H1 (cell line): ENCODE measurements at regions of chr2 and their contacts with region 1.

Region 1: GRCh38 chr2:160022162-160022561 is 40.3 kb downstream of the PLA2R1 start:
- DNase-seq: no peak
- H3K4me3 ChIP-seq: no peak overlapping the region
- H3K27ac ChIP-seq: no peak overlapping the region
- H3K4me1 ChIP-seq: no peaks in the 10 kb centered on the region; a peak in 1 of 7 replicates
- H3K27me3 ChIP-seq: no peaks in the 10 kb centered on the region
- CTCF ChIP-seq: peak in 1 of 3 experiments; percentile 45; a peak in 2 of 4 replicates
- EP300 ChIP-seq: no peak
- POLR2A ChIP-seq: no peak
- RAD21 ChIP-seq: peak; percentile 22 to 34; a peak in 3 of 4 replicates

Region 2: DNA sequence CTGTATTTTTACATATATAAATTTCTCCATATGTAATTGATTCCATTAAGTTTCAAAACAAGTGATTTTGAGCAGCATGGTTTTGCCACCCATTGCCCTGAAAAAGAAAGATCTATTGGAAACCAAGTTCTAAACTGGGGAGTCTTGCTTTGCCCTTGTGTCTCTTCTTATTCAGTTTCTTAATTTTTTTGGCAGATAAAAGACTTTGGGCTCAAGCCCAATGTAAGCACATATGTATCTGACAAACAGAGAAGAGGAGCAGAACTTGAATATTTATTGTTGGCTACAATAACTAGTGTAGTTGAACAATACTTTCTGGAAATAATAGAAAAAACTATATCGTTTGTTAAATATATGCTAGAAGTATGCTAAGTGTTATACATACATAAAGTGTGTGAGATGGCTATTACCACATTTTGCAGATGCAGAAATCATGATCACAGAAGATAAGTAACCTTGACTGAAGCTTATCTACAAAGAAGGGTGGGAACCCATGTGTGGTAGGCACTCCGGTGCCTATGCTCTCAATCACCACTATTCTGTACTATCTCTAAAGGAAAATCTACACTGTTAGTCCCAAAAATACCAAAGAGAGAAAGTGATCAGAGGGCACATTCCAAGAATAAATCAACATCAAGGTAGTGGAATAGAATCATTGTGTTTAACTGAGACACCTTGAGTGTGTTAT is 68.9 kb before region 1 on chr2:
- CTCF ChIA-PET with region 1: no interaction called
- POLR2A ChIA-PET with region 1: no interaction called
- DNase-seq: no peak
- H3K4me3 ChIP-seq: no peak overlapping the region
- H3K27ac ChIP-seq: no peak overlapping the region
- H3K4me1 ChIP-seq: no peaks in the 10 kb centered on the region
- H3K27me3 ChIP-seq: no peaks in the 10 kb centered on the region
- CTCF ChIP-seq: no peak
- EP300 ChIP-seq: no peak
- POLR2A ChIP-seq: no peak
- RAD21 ChIP-seq: no peak

Region 3: GRCh38 chr2:160006475-160006874 is 15.7 kb before region 1 on chr2:
- CTCF ChIA-PET with region 1: interaction called, 10 read pairs
- POLR2A ChIA-PET with region 1: no interaction called
- DNase-seq: no peak
- H3K4me3 ChIP-seq: no peak overlapping the region
- H3K27ac ChIP-seq: no peak overlapping the region
- H3K4me1 ChIP-seq: no peaks in the 10 kb centered on the region; a peak in 1 of 7 replicates
- H3K27me3 ChIP-seq: no peaks in the 10 kb centered on the region
- CTCF ChIP-seq: no peak
- EP300 ChIP-seq: no peak
- POLR2A ChIP-seq: no peak
- RAD21 ChIP-seq: no peak

Region 4: GRCh38 chr2:160036736-160037135 is 14.6 kb after region 1 on chr2:
- CTCF ChIA-PET with region 1: interaction called, 11 read pairs
- POLR2A ChIA-PET with region 1: no interaction called
- DNase-seq: no peak
- H3K4me3 ChIP-seq: no peak overlapping the region
- H3K27ac ChIP-seq: no peak overlapping the region
- H3K4me1 ChIP-seq: peaks cover 0 to 8% (median 2%) of the 10 kb centered on the region in 4 experiments; a peak in 4 of 7 replicates
- H3K27me3 ChIP-seq: no peaks in the 10 kb centered on the region
- CTCF ChIP-seq: no peak
- EP300 ChIP-seq: no peak
- POLR2A ChIP-seq: no peak
- RAD21 ChIP-seq: no peak

Region 5: GRCh38 chr2:160044728-160045127 is 22.6 kb after region 1 on chr2:
- CTCF ChIA-PET with region 1: interaction called, 12 read pairs
- POLR2A ChIA-PET with region 1: no interaction called
- DNase-seq: no peak
- H3K4me3 ChIP-seq: no peak overlapping the region
- H3K27ac ChIP-seq: no peak overlapping the region
- H3K4me1 ChIP-seq: peaks cover 0 to 8% (median 2%) of the 10 kb centered on the region in 4 experiments; a peak in 4 of 7 replicates
- H3K27me3 ChIP-seq: no peaks in the 10 kb centered on the region
- CTCF ChIP-seq: peak in 2 of 3 experiments; percentile 14 to 44; a peak in 2 of 4 replicates
- EP300 ChIP-seq: no peak
- POLR2A ChIP-seq: no peak
- RAD21 ChIP-seq: 0 out of 4 replicates have a peak, but pooled peaks of 1 of the 2 experiments have one; percentile 10